ENCODE measurements at regions of chr1 and their contacts with region 1.

Region 1: GRCh38 chr1:26126321-26127084 is 14.9 kb downstream of the PDIK1L start:
- DNase-seq: peak; percentile 23 to 95 (median 38)
- ATAC-seq: peak; percentile 98
- H3K4me3 ChIP-seq: peak overlapping the region; percentile 42
- H3K4me3 Mint-ChIP-seq: peak overlapping the region; percentile 47
- H3K27ac ChIP-seq: peak overlapping the region; percentile 8 to 47
- H3K27ac Mint-ChIP-seq: peak overlapping the region; percentile 86
- H3K4me1 ChIP-seq: peaks cover 17% of the 10 kb centered on the region
- H3K4me1 Mint-ChIP-seq: peaks cover 51% of the 10 kb centered on the region
- H3K27me3 ChIP-seq: no peaks in the 10 kb centered on the region
- H3K27me3 Mint-ChIP-seq: no peaks in the 10 kb centered on the region
- CTCF ChIP-seq: no peak

Region 2: GRCh38 chr1:25944986-25945385 is 181.5 kb before region 1 on chr1:
- CTCF ChIA-PET with region 1: no interaction called
- POLR2A ChIA-PET with region 1: no interaction called
- intact Hi-C with region 1: no loop called
- DNase-seq: no peak
- ATAC-seq: no peak
- H3K4me3 ChIP-seq: no peak overlapping the region
- H3K4me3 Mint-ChIP-seq: no peak overlapping the region
- H3K27ac ChIP-seq: no peak overlapping the region
- H3K27ac Mint-ChIP-seq: no peak overlapping the region
- H3K4me1 ChIP-seq: no peaks in the 10 kb centered on the region
- H3K4me1 Mint-ChIP-seq: no peaks in the 10 kb centered on the region
- H3K27me3 ChIP-seq: no peaks in the 10 kb centered on the region
- H3K27me3 Mint-ChIP-seq: no peaks in the 10 kb centered on the region
- CTCF ChIP-seq: no peak

Region 3: GRCh38 chr1:26102526-26102925 is 24.0 kb before region 1 on chr1:
- CTCF ChIA-PET with region 1: interaction called, 14 read pairs
- POLR2A ChIA-PET with region 1: interaction called, 8 read pairs
- intact Hi-C with region 1: loop called in 1 of 2 experiments (anchors 1 kb)
- DNase-seq: no peak
- ATAC-seq: no peak
- H3K4me3 ChIP-seq: no peak overlapping the region
- H3K4me3 Mint-ChIP-seq: no peak overlapping the region
- H3K27ac ChIP-seq: no peak overlapping the region
- H3K27ac Mint-ChIP-seq: no peak overlapping the region
- H3K4me1 ChIP-seq: peaks cover 5% of the 10 kb centered on the region
- H3K4me1 Mint-ChIP-seq: peaks cover 6% of the 10 kb centered on the region
- H3K27me3 ChIP-seq: no peaks in the 10 kb centered on the region
- H3K27me3 Mint-ChIP-seq: no peaks in the 10 kb centered on the region
- CTCF ChIP-seq: no peak

Region 4: GRCh38 chr1:26111530-26112406 is 14.7 kb before region 1 on chr1 and contains the start of gene PDIK1L:
- CTCF ChIA-PET with region 1: interaction called, 11 read pairs
- POLR2A ChIA-PET with region 1: interaction called, 67 read pairs
- intact Hi-C with region 1: loop called (anchors 1 kb)
- DNase-seq: peak; percentile 91 to 99 (median 95)
- ATAC-seq: peak; percentile 86
- H3K4me3 ChIP-seq: peak within 1 kb of the TSS; percentile 99
- H3K4me3 Mint-ChIP-seq: peak within 1 kb of the TSS; percentile 96
- H3K27ac ChIP-seq: peak within 1 kb of the TSS; percentile 34 to 73
- H3K27ac Mint-ChIP-seq: peak within 1 kb of the TSS; percentile 92
- H3K4me1 ChIP-seq: peaks cover 24% of the 10 kb centered on the region
- H3K4me1 Mint-ChIP-seq: peaks cover 38% of the 10 kb centered on the region
- H3K27me3 ChIP-seq: no peaks in the 10 kb centered on the region
- H3K27me3 Mint-ChIP-seq: no peaks in the 10 kb centered on the region
- CTCF ChIP-seq: no peak
- total RNA-seq, gene PDIK1L: 9.5 to 9.9 TPM

Region 5: DNA sequence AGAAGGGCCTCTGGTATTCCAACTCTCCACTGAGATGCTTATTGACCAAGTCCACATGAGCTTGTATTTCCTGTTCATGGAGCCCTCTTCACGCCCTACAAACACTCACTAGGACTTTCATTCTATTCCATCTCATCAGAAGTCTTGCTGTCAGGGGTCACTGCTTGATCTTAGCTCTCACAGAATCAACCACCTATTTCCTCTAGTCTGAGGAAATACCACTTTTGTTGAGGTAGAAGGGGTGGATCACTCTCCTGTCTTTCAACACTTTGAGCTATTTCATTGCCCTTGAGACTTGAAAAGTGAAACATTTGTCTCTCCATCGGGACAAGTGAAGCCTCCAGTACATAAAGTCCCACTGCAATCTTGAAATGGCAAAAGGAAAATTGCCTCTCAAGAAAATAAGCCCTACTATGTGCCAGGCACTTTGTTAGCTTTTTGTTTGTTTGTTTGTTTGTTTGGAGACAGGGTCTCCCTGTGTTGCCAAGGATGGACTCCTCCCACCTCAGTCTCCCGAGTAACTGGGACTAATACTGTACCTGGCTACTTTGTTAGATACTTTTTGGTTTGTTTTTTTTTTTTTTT is 12.6 kb after region 1 on chr1:
- CTCF ChIA-PET with region 1: interaction called, 41 read pairs
- POLR2A ChIA-PET with region 1: interaction called, 38 read pairs
- intact Hi-C with region 1: loop called in 1 of 2 experiments (anchors 2 kb)
- DNase-seq: peak in 1 of 14 experiments; percentile 20
- ATAC-seq: peak; percentile 56
- H3K4me3 ChIP-seq: no peak overlapping the region
- H3K4me3 Mint-ChIP-seq: peak overlapping the region; percentile 43
- H3K27ac ChIP-seq: no peak overlapping the region
- H3K27ac Mint-ChIP-seq: peak overlapping the region; percentile 57
- H3K4me1 ChIP-seq: peaks cover 3% of the 10 kb centered on the region
- H3K4me1 Mint-ChIP-seq: peaks cover 14% of the 10 kb centered on the region
- H3K27me3 ChIP-seq: no peaks in the 10 kb centered on the region
- H3K27me3 Mint-ChIP-seq: no peaks in the 10 kb centered on the region
- CTCF ChIP-seq: no peak

Measured in CD4-positive, alpha-beta T cell (primary cell).